AG04450 (cell line): ENCODE measurements at regions of chr2 and their contacts with region 1.

Region 1: GRCh38 chr2:110906613-110907298 is 174.4 kb downstream of the ACOXL start:
- DNase-seq: no peak
- H3K4me3 ChIP-seq: no peak overlapping the region
- H3K27ac ChIP-seq: no peak overlapping the region
- H3K27me3 ChIP-seq: peaks cover 10% of the 10 kb centered on the region
- CTCF ChIP-seq: no peak

Region 2: GRCh38 chr2:110827511-110827910 is 79.2 kb before region 1 on chr2:
- CTCF ChIA-PET with region 1: no interaction called
- POLR2A ChIA-PET with region 1: interaction called, 11 read pairs
- DNase-seq: no peak
- H3K4me3 ChIP-seq: no peak overlapping the region
- H3K27ac ChIP-seq: no peak overlapping the region
- H3K27me3 ChIP-seq: peaks cover 2% of the 10 kb centered on the region
- CTCF ChIP-seq: no peak